ENCODE measurements at regions of chr9 and their contacts with region 1.

Region 1: GRCh38 chr9:124149992-124150391 is 107.8 kb upstream of the NEK6 start:
- DNase-seq: no peak
- H3K4me3 ChIP-seq: no peak overlapping the region
- H3K27ac ChIP-seq: no peak overlapping the region
- H3K4me1 ChIP-seq: peaks cover 13% of the 10 kb centered on the region; the same call in 1 of the 2 replicates
- H3K27me3 ChIP-seq: peaks cover 27% of the 10 kb centered on the region
- CTCF ChIP-seq: no peak

Region 2: GRCh38 chr9:124164811-124165210 is 14.8 kb after region 1 on chr9:
- CTCF ChIA-PET with region 1: no interaction called
- POLR2A ChIA-PET with region 1: no interaction called
- intact Hi-C with region 1: loop called (anchors 2 kb)
- DNase-seq: no peak
- H3K4me3 ChIP-seq: no peak overlapping the region
- H3K27ac ChIP-seq: no peak overlapping the region
- H3K4me1 ChIP-seq: no peaks in the 10 kb centered on the region
- H3K27me3 ChIP-seq: peaks cover 15% of the 10 kb centered on the region
- CTCF ChIP-seq: no peak

Measured in PC-9 (cell line).